ENCODE measurements at regions of chr5 and their contacts with region 1.

Region 1: DNA sequence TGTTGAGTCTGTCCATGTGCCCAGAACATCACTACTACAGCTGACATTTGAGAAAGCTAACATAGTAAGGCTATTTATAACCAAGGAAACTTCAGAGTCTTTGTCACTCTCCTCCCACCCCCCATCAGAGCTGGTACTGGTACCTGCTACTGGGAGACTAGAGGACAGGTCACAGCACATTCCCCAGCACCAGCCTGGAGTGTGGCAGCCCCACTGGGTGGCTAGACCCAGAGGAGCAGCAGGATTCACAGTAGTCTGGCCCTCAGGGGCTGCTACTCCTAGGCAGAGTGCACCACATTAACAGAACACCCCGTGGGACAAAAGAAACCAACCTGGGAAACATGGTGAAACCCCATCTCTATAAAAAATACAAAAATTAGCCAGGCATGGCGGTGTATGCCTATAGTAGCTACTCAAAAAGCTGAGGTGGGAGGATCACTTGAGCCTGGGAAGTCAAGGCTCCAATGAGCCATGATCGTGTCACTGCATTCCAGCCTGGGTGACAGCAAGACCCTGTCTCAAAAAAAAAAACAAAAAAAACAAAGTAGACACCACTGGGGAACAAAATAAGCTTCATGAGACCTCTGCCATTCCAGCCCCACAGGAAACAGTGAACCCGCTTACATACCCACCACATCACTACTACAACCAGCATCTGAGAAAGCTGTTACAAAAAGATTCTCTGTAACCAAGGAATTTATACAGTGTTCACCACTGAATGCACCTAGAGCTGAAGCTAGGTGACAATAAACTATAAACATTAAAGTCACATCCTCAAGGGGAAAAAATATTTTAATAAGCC is 26.3 kb upstream of the PTGER4 start:
- DNase-seq: peak; percentile 22
- H3K4me3 Mint-ChIP-seq: peak overlapping the region; percentile 54
- H3K27ac Mint-ChIP-seq: peak overlapping the region; percentile 67
- H3K4me1 Mint-ChIP-seq: peaks cover 57% of the 10 kb centered on the region
- H3K27me3 Mint-ChIP-seq: no peaks in the 10 kb centered on the region

Region 2: GRCh38 chr5:40540301-40540700 is 113.1 kb before region 1 on chr5:
- CTCF ChIA-PET with region 1: no interaction called
- intact Hi-C with region 1: no loop called
- DNase-seq: no peak
- H3K4me3 Mint-ChIP-seq: no peak overlapping the region
- H3K27ac Mint-ChIP-seq: no peak overlapping the region
- H3K4me1 Mint-ChIP-seq: peaks cover 3% of the 10 kb centered on the region
- H3K27me3 Mint-ChIP-seq: no peaks in the 10 kb centered on the region

Region 3: DNA sequence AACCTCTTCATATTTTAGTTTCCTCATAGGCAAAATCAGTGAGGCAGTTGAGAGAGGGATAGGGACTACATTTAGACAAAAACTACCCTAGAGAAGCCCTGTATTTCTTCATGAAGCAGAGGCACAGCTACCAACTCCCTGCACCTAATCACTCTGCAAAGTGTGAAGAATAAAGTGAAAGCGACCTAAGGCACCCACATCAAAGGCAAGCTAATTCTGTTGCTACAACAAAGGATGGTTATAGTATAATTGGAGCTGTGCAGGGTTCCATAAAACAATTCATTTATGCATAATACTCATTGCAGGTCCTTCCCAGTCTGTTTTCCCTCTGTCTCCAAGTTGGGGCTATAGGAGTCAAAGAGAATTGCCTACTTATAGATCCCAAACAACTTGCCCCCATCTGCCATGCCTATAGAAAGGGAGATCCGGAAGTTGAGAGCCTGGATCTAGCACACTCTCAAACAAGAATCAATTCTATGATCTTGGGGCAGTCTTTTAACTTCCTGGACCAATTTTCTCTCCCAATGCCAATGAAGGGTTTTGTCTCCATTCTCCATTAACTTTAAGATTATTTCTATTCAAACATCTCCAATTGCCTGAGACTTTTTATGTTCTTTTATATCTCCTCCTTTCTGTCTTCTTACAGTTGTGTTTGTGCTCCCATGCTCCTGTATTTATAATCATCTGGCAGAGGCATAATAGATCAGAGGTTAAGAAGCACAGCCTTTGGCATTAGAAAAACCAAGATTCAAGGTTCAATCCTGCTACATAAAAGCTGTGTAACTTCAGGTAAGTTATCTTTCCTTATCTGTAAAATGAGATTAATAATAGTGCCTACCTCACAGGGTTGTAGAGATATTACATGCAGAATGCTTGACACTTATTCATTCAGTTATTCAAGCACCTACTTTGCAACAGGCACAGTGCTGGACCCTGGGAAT is 29.7 kb before region 1 on chr5:
- CTCF ChIA-PET with region 1: no interaction called
- intact Hi-C with region 1: loop called (anchors 2 kb)
- DNase-seq: peak; percentile 60
- H3K4me3 Mint-ChIP-seq: no peak overlapping the region
- H3K27ac Mint-ChIP-seq: no peak overlapping the region
- H3K4me1 Mint-ChIP-seq: peaks cover 45% of the 10 kb centered on the region
- H3K27me3 Mint-ChIP-seq: no peaks in the 10 kb centered on the region

Region 4: GRCh38 chr5:40665635-40666301 is 12.3 kb after region 1 on chr5:
- CTCF ChIA-PET with region 1: interaction called, 4 read pairs
- intact Hi-C with region 1: loop called (anchors 1 kb)
- DNase-seq: no peak
- H3K4me3 Mint-ChIP-seq: no peak overlapping the region
- H3K27ac Mint-ChIP-seq: no peak overlapping the region
- H3K4me1 Mint-ChIP-seq: peaks cover 22% of the 10 kb centered on the region
- H3K27me3 Mint-ChIP-seq: no peaks in the 10 kb centered on the region

Region 5: GRCh38 chr5:40700116-40700782 is 46.8 kb after region 1 on chr5:
- CTCF ChIA-PET with region 1: no interaction called
- intact Hi-C with region 1: no loop called
- DNase-seq: no peak
- H3K4me3 Mint-ChIP-seq: no peak overlapping the region
- H3K27ac Mint-ChIP-seq: no peak overlapping the region
- H3K4me1 Mint-ChIP-seq: no peaks in the 10 kb centered on the region
- H3K27me3 Mint-ChIP-seq: no peaks in the 10 kb centered on the region

Region 6: DNA sequence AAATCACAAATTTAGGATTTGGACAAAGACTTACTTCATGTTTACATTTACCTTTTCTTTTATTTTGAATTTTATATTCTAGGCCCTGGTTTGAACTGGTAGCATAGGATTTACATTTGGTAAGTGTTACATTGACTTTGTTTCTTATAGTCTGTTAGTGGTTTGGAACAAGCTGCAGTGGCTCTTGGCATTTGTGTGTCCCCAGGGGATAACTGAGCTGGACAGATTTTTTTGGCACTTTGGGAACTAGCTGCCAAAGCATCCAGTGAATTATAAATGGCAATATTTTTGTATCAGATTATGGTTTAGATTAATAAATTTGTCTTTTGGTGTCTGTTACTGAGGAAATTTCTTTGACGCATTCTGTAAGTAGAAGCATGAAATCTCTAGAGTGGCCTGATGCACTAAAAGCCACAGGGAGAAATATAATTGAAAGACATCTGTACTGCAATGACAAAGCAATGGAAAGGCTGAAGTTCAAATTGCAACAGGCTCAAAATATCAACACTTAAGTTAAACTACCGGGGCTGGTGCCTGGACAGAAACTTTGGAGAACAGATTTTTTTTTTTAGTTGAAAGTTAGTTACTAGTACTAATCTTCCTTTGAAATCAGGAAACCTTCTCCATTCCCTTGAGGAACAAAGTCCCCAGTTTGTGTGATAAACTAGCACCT is 964.6 kb after region 1 on chr5:
- CTCF ChIA-PET with region 1: no interaction called
- intact Hi-C with region 1: no loop called
- DNase-seq: no peak
- H3K4me3 Mint-ChIP-seq: no peak overlapping the region
- H3K27ac Mint-ChIP-seq: no peak overlapping the region
- H3K4me1 Mint-ChIP-seq: no peaks in the 10 kb centered on the region
- H3K27me3 Mint-ChIP-seq: peaks cover 3% of the 10 kb centered on the region